HCT116 (cell line): ENCODE measurements at regions of chr10 and their contacts with region 1.

Region 1: DNA sequence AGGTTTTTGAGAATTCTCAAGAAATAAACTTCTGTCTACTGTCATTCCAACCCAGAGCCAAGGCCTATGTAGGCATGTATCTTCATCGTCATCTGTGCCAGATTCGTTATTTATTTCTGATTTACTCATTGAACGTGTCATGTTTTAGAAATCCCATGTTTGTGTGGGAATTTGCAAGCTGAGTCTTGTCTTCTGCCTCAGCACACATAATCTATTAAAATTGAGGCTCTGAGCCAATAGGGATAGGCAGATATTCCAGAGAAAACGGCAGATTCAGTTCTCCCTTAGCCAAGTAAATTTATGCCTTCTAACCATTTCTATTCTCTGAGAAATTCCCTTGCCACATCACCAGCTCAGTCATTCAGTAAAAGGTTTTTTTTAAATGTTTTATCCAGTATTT is 444.6 kb downstream of the REEP3 start:
- DNase-seq: no peak
- ATAC-seq: no peak
- H3K4me3 ChIP-seq: no peak overlapping the region
- H3K27ac ChIP-seq: no peak overlapping the region
- H3K4me1 ChIP-seq: no peaks in the 10 kb centered on the region
- H3K27me3 ChIP-seq: no peaks in the 10 kb centered on the region
- CTCF ChIP-seq: no peak
- POLR2A ChIP-seq: no peak
- RAD21 ChIP-seq: no peak

Region 2: GRCh38 chr10:63976538-63976937 is 10.7 kb after region 1 on chr10:
- CTCF ChIA-PET with region 1: interaction called, 11 read pairs
- POLR2A ChIA-PET with region 1: no interaction called
- RAD21 ChIA-PET with region 1: no interaction called
- intact Hi-C with region 1: no loop called
- DNase-seq: peak; percentile 48
- ATAC-seq: peak; percentile 99
- H3K4me3 ChIP-seq: no peak overlapping the region
- H3K27ac ChIP-seq: no peak overlapping the region; the same call in 1 of the 2 replicates
- H3K4me1 ChIP-seq: peaks cover 2 to 6% of the 10 kb centered on the region in 2 experiments; a peak in 2 of 4 replicates
- H3K27me3 ChIP-seq: no peaks in the 10 kb centered on the region
- CTCF ChIP-seq: peak; percentile 77 to 84 (median 81)
- POLR2A ChIP-seq: no peak
- RAD21 ChIP-seq: peak; percentile 76

Region 3: GRCh38 chr10:64041185-64041988 is 75.5 kb after region 1 on chr10:
- CTCF ChIA-PET with region 1: no interaction called
- POLR2A ChIA-PET with region 1: no interaction called
- RAD21 ChIA-PET with region 1: no interaction called
- intact Hi-C with region 1: no loop called
- DNase-seq: peak; percentile 68
- ATAC-seq: peak; percentile 98
- H3K4me3 ChIP-seq: peak overlapping the region in 1 of 2 experiments; percentile 21; a peak in 1 of 4 replicates
- H3K27ac ChIP-seq: no peak overlapping the region
- H3K4me1 ChIP-seq: peaks cover 0 to 4% of the 10 kb centered on the region in 2 experiments; a peak in 1 of 4 replicates
- H3K27me3 ChIP-seq: no peaks in the 10 kb centered on the region
- CTCF ChIP-seq: peak; percentile 99 to 100 (median 99)
- POLR2A ChIP-seq: no peak
- RAD21 ChIP-seq: peak; percentile 95